ENCODE measurements at regions of chr14 and their contacts with region 1.

Region 1: DNA sequence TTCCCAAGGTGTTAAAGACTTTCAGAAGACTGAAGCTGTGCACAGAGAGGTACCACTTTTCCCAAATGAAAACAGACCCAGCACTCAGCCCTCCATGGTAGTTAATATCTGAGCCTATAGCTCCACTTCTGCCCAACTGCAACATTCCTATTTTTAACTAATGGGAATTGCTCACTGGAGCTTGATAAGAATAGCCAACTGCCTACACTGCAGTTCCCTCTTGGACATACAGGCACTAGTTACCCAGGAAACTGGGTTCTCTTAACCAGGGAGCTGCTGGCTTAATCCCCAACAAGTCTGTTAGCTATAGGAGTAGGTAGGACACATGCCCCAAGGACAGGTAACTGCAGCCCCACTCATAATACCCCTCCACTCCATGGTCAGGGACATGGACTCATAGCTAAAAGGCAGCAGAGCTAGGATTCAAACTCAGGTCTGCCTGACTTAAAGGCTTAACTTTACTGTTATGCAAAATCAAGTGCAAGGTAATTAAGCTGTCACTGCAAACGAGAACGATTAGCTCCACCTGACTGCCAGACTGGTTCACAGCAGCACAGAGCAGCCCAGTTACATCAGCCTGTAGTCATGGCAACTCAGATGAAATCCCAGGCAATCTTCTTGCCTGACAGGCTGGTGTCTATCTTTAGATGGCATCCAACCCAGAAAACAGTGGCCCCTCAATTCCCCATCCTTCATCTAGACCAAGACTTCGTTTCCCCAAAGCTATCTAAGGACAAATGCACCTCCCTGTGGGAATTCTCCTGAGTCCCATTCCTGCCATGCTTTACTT is 77.1 kb upstream of the ACTN1 start:
- DNase-seq: peak; percentile 49
- ATAC-seq: peak; percentile 92
- H3K4me3 Mint-ChIP-seq: no peak overlapping the region
- H3K27ac Mint-ChIP-seq: peak overlapping the region; percentile 54; the same call in 1 of the 2 replicates
- H3K4me1 Mint-ChIP-seq: peaks cover 21% of the 10 kb centered on the region
- H3K27me3 Mint-ChIP-seq: no peaks in the 10 kb centered on the region
- CTCF ChIP-seq: no peak

Region 2: GRCh38 chr14:68862954-68863594 is 193.1 kb before region 1 on chr14:
- CTCF ChIA-PET with region 1: interaction called, 10 read pairs
- POLR2A ChIA-PET with region 1: no interaction called
- DNase-seq: peak; percentile 85
- ATAC-seq: peak; percentile 90
- H3K4me3 Mint-ChIP-seq: no peak overlapping the region
- H3K27ac Mint-ChIP-seq: no peak overlapping the region
- H3K4me1 Mint-ChIP-seq: peaks cover 3% of the 10 kb centered on the region; the same call in 1 of the 2 replicates
- H3K27me3 Mint-ChIP-seq: no peaks in the 10 kb centered on the region; the same call in 1 of the 2 replicates
- CTCF ChIP-seq: peak; percentile 64

Region 3: GRCh38 chr14:68939893-68940613 is 116.1 kb before region 1 on chr14:
- CTCF ChIA-PET with region 1: interaction called, 12 read pairs
- POLR2A ChIA-PET with region 1: no interaction called
- DNase-seq: peak; percentile 40
- ATAC-seq: peak; percentile 25
- H3K4me3 Mint-ChIP-seq: no peak overlapping the region
- H3K27ac Mint-ChIP-seq: no peak overlapping the region
- H3K4me1 Mint-ChIP-seq: peaks cover 85% of the 10 kb centered on the region
- H3K27me3 Mint-ChIP-seq: no peaks in the 10 kb centered on the region
- CTCF ChIP-seq: no peak

Region 4: GRCh38 chr14:69038455-69039287 is 17.5 kb before region 1 on chr14:
- CTCF ChIA-PET with region 1: interaction called, 12 read pairs
- POLR2A ChIA-PET with region 1: no interaction called
- DNase-seq: no peak
- ATAC-seq: peak; percentile 13; the same call in 1 of the 2 replicates
- H3K4me3 Mint-ChIP-seq: no peak overlapping the region
- H3K27ac Mint-ChIP-seq: no peak overlapping the region
- H3K4me1 Mint-ChIP-seq: peaks cover 58% of the 10 kb centered on the region
- H3K27me3 Mint-ChIP-seq: no peaks in the 10 kb centered on the region
- CTCF ChIP-seq: no peak

Region 5: GRCh38 chr14:69107407-69108003 is 51.3 kb after region 1 on chr14:
- CTCF ChIA-PET with region 1: interaction called, 13 read pairs
- POLR2A ChIA-PET with region 1: no interaction called
- DNase-seq: peak; percentile 18
- ATAC-seq: peak; percentile 98
- H3K4me3 Mint-ChIP-seq: no peak overlapping the region
- H3K27ac Mint-ChIP-seq: peak overlapping the region; percentile 50; the same call in 1 of the 2 replicates
- H3K4me1 Mint-ChIP-seq: peaks cover 4% of the 10 kb centered on the region
- H3K27me3 Mint-ChIP-seq: no peaks in the 10 kb centered on the region
- CTCF ChIP-seq: peak; percentile 57; the same call in 1 of the 2 replicates